Activated T-helper 2 cell treated with anti-CD3 and anti-CD28 coated beads, Interferon-gamma antibody, Interleukin-2, Interleukin-4, amounts not matched to agents 10 μg/mL and 5 μg/mL and 100 μg/mL, durations not matched to agents 14 hours and 24 hours and 36 hours (primary cell): ENCODE measurements at regions of chr2 and their contacts with region 1.

Region 1: GRCh38 chr2:98385050-98385699 is 38.9 kb downstream of the CNGA3 start:
- DNase-seq: peak; percentile 64
- H3K4me3 Mint-ChIP-seq: no peak overlapping the region
- H3K27ac Mint-ChIP-seq: no peak overlapping the region
- H3K4me1 Mint-ChIP-seq: peaks cover 3% of the 10 kb centered on the region
- H3K27me3 Mint-ChIP-seq: peaks cover 5% of the 10 kb centered on the region

Region 2: GRCh38 chr2:97718051-97718882 is 666.9 kb before region 1 on chr2:
- intact Hi-C with region 1: loop called (anchors 5 kb)
- DNase-seq: peak; percentile 69
- H3K4me3 Mint-ChIP-seq: peak overlapping the region; percentile 97
- H3K27ac Mint-ChIP-seq: peak overlapping the region; percentile 91
- H3K4me1 Mint-ChIP-seq: peaks cover 67% of the 10 kb centered on the region
- H3K27me3 Mint-ChIP-seq: no peaks in the 10 kb centered on the region

Region 3: GRCh38 chr2:98334439-98335078 is 50.6 kb before region 1 on chr2:
- intact Hi-C with region 1: no loop called
- DNase-seq: no peak
- H3K4me3 Mint-ChIP-seq: no peak overlapping the region
- H3K27ac Mint-ChIP-seq: no peak overlapping the region
- H3K4me1 Mint-ChIP-seq: no peaks in the 10 kb centered on the region
- H3K27me3 Mint-ChIP-seq: peaks cover 16% of the 10 kb centered on the region